ENCODE measurements at regions of chr9 and their contacts with region 1.

Region 1: GRCh38 chr9:98034593-98035546 is 21.7 kb upstream of the NANS start:
- DNase-seq: peak; percentile 77 to 97 (median 91)
- ATAC-seq: peak; percentile 99
- H3K4me3 ChIP-seq: no peak overlapping the region
- H3K4me3 Mint-ChIP-seq: no peak overlapping the region
- H3K27ac ChIP-seq: no peak overlapping the region
- H3K27ac Mint-ChIP-seq: no peak overlapping the region
- H3K4me1 ChIP-seq: no peaks in the 10 kb centered on the region
- H3K4me1 Mint-ChIP-seq: peaks cover 6% of the 10 kb centered on the region
- H3K27me3 ChIP-seq: no peaks in the 10 kb centered on the region
- H3K27me3 Mint-ChIP-seq: no peaks in the 10 kb centered on the region
- CTCF ChIP-seq: peak; percentile 80

Region 2: DNA sequence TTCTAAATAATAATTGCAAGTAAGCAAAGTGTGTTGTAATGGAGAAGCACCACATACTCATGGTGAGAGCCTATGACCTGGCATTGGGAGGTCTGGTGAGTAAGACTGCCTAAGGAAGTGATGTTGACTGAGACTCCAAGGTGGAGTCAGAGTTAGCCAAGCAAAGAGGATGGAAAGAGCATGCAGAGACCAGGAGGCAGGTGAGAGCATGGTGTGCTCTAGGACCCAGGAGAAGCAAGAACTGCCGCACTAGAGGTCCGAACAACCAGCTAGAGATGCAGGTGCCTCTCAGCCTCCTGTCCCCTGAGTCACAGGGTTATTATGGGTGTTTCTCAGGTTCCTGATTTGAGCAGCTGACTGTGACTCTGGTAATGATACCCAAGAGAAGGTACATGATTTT is 24.4 kb before region 1 on chr9:
- CTCF ChIA-PET with region 1: interaction called, 11 read pairs
- POLR2A ChIA-PET with region 1: no interaction called
- intact Hi-C with region 1: no loop called
- DNase-seq: peak in 1 of 9 experiments; percentile 24
- ATAC-seq: peak; percentile 49
- H3K4me3 ChIP-seq: no peak overlapping the region
- H3K4me3 Mint-ChIP-seq: no peak overlapping the region
- H3K27ac ChIP-seq: no peak overlapping the region
- H3K27ac Mint-ChIP-seq: peak overlapping the region; percentile 27
- H3K4me1 ChIP-seq: no peaks in the 10 kb centered on the region
- H3K4me1 Mint-ChIP-seq: peaks cover 35% of the 10 kb centered on the region
- H3K27me3 ChIP-seq: no peaks in the 10 kb centered on the region
- H3K27me3 Mint-ChIP-seq: no peaks in the 10 kb centered on the region
- CTCF ChIP-seq: no peak

Region 3: DNA sequence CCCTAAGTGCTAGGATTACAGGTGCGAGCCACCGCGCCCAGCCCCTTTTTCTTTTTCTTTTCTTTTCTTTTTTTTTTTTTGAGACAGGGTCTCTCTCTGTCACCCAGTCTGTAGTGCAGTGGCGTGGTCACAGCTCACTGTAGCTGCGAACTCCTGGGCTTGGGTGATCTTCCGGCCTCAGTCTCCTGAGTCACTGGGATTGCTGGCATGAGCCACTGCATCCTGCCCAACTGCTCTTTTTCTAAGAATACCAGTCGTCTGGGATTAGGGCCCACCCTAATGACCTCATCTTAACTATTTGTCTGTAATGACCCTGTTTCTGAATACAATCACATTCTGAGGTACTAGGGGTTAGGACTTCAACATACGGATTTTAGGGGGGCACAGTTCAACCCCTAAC is 12.4 kb before region 1 on chr9:
- CTCF ChIA-PET with region 1: interaction called, 19 read pairs
- POLR2A ChIA-PET with region 1: no interaction called
- intact Hi-C with region 1: no loop called
- DNase-seq: peak in 1 of 9 experiments; percentile 1
- ATAC-seq: no peak
- H3K4me3 ChIP-seq: no peak overlapping the region
- H3K4me3 Mint-ChIP-seq: no peak overlapping the region
- H3K27ac ChIP-seq: no peak overlapping the region
- H3K27ac Mint-ChIP-seq: no peak overlapping the region
- H3K4me1 ChIP-seq: no peaks in the 10 kb centered on the region
- H3K4me1 Mint-ChIP-seq: no peaks in the 10 kb centered on the region
- H3K27me3 ChIP-seq: no peaks in the 10 kb centered on the region
- H3K27me3 Mint-ChIP-seq: no peaks in the 10 kb centered on the region
- CTCF ChIP-seq: no peak

Region 4: GRCh38 chr9:98045234-98046179 is 10.6 kb after region 1 on chr9:
- CTCF ChIA-PET with region 1: interaction called, 20 read pairs
- POLR2A ChIA-PET with region 1: interaction called, 4 read pairs
- intact Hi-C with region 1: no loop called
- DNase-seq: peak in 6 of 9 experiments; percentile 14 to 88 (median 32)
- ATAC-seq: peak; percentile 97
- H3K4me3 ChIP-seq: peak overlapping the region; percentile 46 to 55
- H3K4me3 Mint-ChIP-seq: peak overlapping the region; percentile 78
- H3K27ac ChIP-seq: peak overlapping the region; percentile 47 to 77
- H3K27ac Mint-ChIP-seq: peak overlapping the region; percentile 93
- H3K4me1 ChIP-seq: peaks cover 21% of the 10 kb centered on the region
- H3K4me1 Mint-ChIP-seq: peaks cover 31% of the 10 kb centered on the region
- H3K27me3 ChIP-seq: no peaks in the 10 kb centered on the region
- H3K27me3 Mint-ChIP-seq: no peaks in the 10 kb centered on the region
- CTCF ChIP-seq: no peak

Region 5: GRCh38 chr9:98081477-98082219 is 46.8 kb after region 1 on chr9:
- CTCF ChIA-PET with region 1: no interaction called
- POLR2A ChIA-PET with region 1: no interaction called
- intact Hi-C with region 1: no loop called
- DNase-seq: no peak
- ATAC-seq: peak; percentile 52
- H3K4me3 ChIP-seq: no peak overlapping the region
- H3K4me3 Mint-ChIP-seq: no peak overlapping the region
- H3K27ac ChIP-seq: no peak overlapping the region
- H3K27ac Mint-ChIP-seq: peak overlapping the region; percentile 67
- H3K4me1 ChIP-seq: peaks cover 23% of the 10 kb centered on the region
- H3K4me1 Mint-ChIP-seq: peaks cover 41% of the 10 kb centered on the region
- H3K27me3 ChIP-seq: no peaks in the 10 kb centered on the region
- H3K27me3 Mint-ChIP-seq: no peaks in the 10 kb centered on the region
- CTCF ChIP-seq: no peak

Region 6: DNA sequence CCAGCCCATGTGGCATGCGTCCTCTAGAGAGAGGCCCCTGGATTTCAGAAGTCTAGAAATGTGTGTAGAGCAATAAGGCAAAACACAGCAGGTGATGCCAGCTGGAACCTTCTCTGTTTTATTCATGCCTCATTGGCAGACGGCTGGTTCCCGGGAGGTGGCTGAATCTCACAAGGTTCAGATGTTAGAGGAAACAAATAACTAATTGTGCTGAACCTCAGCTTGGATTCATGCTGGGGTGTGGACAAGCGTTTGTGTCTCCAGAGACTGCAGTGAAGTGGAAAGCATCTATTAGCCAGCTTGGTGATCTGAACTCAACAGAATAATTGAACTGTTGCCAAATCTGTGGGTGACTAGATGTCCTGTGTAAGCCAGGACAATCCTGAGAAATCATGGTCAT is 1655.7 kb after region 1 on chr9:
- CTCF ChIA-PET with region 1: no interaction called
- POLR2A ChIA-PET with region 1: no interaction called
- intact Hi-C with region 1: no loop called
- DNase-seq: no peak
- ATAC-seq: no peak
- H3K4me3 ChIP-seq: no peak overlapping the region
- H3K4me3 Mint-ChIP-seq: no peak overlapping the region
- H3K27ac ChIP-seq: no peak overlapping the region
- H3K27ac Mint-ChIP-seq: no peak overlapping the region
- H3K4me1 ChIP-seq: no peaks in the 10 kb centered on the region
- H3K4me1 Mint-ChIP-seq: no peaks in the 10 kb centered on the region
- H3K27me3 ChIP-seq: no peaks in the 10 kb centered on the region
- H3K27me3 Mint-ChIP-seq: no peaks in the 10 kb centered on the region
- CTCF ChIP-seq: no peak

Measured in CD8-positive, alpha-beta T cell (primary cell).